A673 (cell line): ENCODE measurements at regions of chr10 and their contacts with region 1.

Region 1: GRCh38 chr10:16777473-16778370 is 39.5 kb downstream of the RSU1 start:
- DNase-seq: peak; percentile 65
- H3K4me3 ChIP-seq: no peak overlapping the region
- H3K27ac ChIP-seq: no peak overlapping the region
- H3K4me1 ChIP-seq: peaks cover 14% of the 10 kb centered on the region
- H3K27me3 ChIP-seq: no peaks in the 10 kb centered on the region
- CTCF ChIP-seq: peak; percentile 81

Region 2: GRCh38 chr10:16116404-16117304 is 661.1 kb before region 1 on chr10:
- CTCF ChIA-PET with region 1: no interaction called
- POLR2A ChIA-PET with region 1: no interaction called
- intact Hi-C with region 1: loop called (anchors 5 kb)
- DNase-seq: peak; percentile 60
- H3K4me3 ChIP-seq: no peak overlapping the region
- H3K27ac ChIP-seq: no peak overlapping the region
- H3K4me1 ChIP-seq: no peaks in the 10 kb centered on the region
- H3K27me3 ChIP-seq: peaks cover 34% of the 10 kb centered on the region
- CTCF ChIP-seq: peak; percentile 66

Region 3: GRCh38 chr10:16231734-16232435 is 545.8 kb before region 1 on chr10:
- CTCF ChIA-PET with region 1: no interaction called
- POLR2A ChIA-PET with region 1: no interaction called
- intact Hi-C with region 1: no loop called
- DNase-seq: no peak
- H3K4me3 ChIP-seq: no peak overlapping the region
- H3K27ac ChIP-seq: no peak overlapping the region
- H3K4me1 ChIP-seq: no peaks in the 10 kb centered on the region
- H3K27me3 ChIP-seq: peaks cover 46% of the 10 kb centered on the region
- CTCF ChIP-seq: no peak

Region 4: DNA sequence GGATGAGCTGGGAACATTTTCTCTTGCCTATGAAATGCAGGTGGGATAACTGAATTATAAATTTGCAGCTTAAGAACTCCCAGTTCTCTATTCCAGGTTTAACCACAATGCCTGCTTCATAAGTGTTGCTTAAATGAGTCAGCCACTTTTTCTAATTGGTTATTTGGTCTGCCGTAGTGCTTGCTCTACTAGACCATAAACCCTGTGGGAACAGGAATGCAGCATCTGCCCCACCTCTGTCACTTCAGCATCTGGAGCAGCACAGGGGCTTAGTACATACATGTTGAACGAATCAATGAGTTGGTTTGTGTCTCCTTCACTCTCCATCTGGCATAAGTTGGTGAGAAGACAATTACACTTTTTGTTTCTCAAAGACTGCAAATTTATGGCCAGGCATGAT is 436.1 kb before region 1 on chr10:
- CTCF ChIA-PET with region 1: no interaction called
- POLR2A ChIA-PET with region 1: no interaction called
- intact Hi-C with region 1: no loop called
- DNase-seq: no peak
- H3K4me3 ChIP-seq: no peak overlapping the region
- H3K27ac ChIP-seq: no peak overlapping the region
- H3K4me1 ChIP-seq: no peaks in the 10 kb centered on the region
- H3K27me3 ChIP-seq: peaks cover 28% of the 10 kb centered on the region
- CTCF ChIP-seq: no peak

Region 5: GRCh38 chr10:17474595-17475323 is 697.0 kb after region 1 on chr10:
- CTCF ChIA-PET with region 1: no interaction called
- POLR2A ChIA-PET with region 1: no interaction called
- intact Hi-C with region 1: no loop called
- DNase-seq: peak; percentile 50
- H3K4me3 ChIP-seq: no peak overlapping the region
- H3K27ac ChIP-seq: no peak overlapping the region
- H3K4me1 ChIP-seq: no peaks in the 10 kb centered on the region
- H3K27me3 ChIP-seq: peaks cover 8% of the 10 kb centered on the region
- CTCF ChIP-seq: peak; percentile 32; the same call in 1 of the 2 replicates